Calu3 (cell line): ENCODE measurements at regions of chr4 and their contacts with region 1.

Region 1: GRCh38 chr4:74932816-74933561 is at the start of gene PARM1:
- DNase-seq: peak; percentile 90
- H3K4me3 Mint-ChIP-seq: peak within 1 kb of the TSS; percentile 95
- H3K27ac Mint-ChIP-seq: no peak within 1 kb of the TSS
- H3K4me1 Mint-ChIP-seq: no peaks in the 10 kb centered on the region
- H3K27me3 Mint-ChIP-seq: peaks cover 14% of the 10 kb centered on the region
- CTCF ChIP-seq: peak; percentile 60
- total RNA-seq, gene PARM1: 4.4 and 6.5 TPM in 2 replicates

Region 2: GRCh38 chr4:74874753-74875367 is 58.1 kb before region 1 on chr4:
- CTCF ChIA-PET with region 1: interaction called, 10 read pairs
- intact Hi-C with region 1: no loop called
- DNase-seq: peak; percentile 32
- H3K4me3 Mint-ChIP-seq: no peak overlapping the region
- H3K27ac Mint-ChIP-seq: no peak overlapping the region
- H3K4me1 Mint-ChIP-seq: no peaks in the 10 kb centered on the region
- H3K27me3 Mint-ChIP-seq: peaks cover under 1% of the 10 kb centered on the region
- CTCF ChIP-seq: peak; percentile 48

Region 3: GRCh38 chr4:75118739-75119138 is 185.8 kb after region 1 on chr4:
- CTCF ChIA-PET with region 1: no interaction called
- intact Hi-C with region 1: loop called (anchors 5 kb)
- DNase-seq: no peak
- H3K4me3 Mint-ChIP-seq: no peak overlapping the region
- H3K27ac Mint-ChIP-seq: no peak overlapping the region
- H3K4me1 Mint-ChIP-seq: no peaks in the 10 kb centered on the region
- H3K27me3 Mint-ChIP-seq: no peaks in the 10 kb centered on the region
- CTCF ChIP-seq: no peak

Region 4: GRCh38 chr4:75289914-75290582 is 357.1 kb after region 1 on chr4:
- CTCF ChIA-PET with region 1: interaction called, 3 read pairs
- intact Hi-C with region 1: loop called (anchors 2 kb)
- DNase-seq: peak; percentile 17
- H3K4me3 Mint-ChIP-seq: no peak overlapping the region
- H3K27ac Mint-ChIP-seq: no peak overlapping the region
- H3K4me1 Mint-ChIP-seq: no peaks in the 10 kb centered on the region
- H3K27me3 Mint-ChIP-seq: peaks cover 13% of the 10 kb centered on the region
- CTCF ChIP-seq: no peak